ENCODE measurements at regions of chr11 and their contacts with region 1.

Region 1: GRCh38 chr11:91041626-91042025 is 818.8 kb upstream of the CHORDC1 start:
- DNase-seq: no peak

Region 2: DNA sequence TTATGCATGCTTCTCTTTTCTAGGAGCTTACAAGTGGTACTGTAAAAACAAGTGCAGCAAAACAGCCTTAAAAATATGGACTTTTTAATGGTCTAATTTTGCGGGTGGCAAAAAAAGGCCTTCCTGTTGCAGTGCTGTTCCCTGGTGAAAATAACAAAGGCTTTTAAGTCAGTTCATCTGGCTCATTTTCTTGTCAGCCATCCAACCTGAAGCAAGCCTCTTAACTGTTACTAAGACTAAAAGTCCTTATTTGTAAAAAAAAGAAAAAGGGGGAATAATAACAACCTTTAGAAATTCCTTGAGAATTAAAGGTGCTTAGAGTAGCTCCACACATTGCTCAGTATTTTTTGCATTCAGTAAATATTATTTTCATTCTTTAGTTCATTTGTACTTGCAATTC is 618.2 kb before region 1 on chr11:
- intact Hi-C with region 1: loop called in 1 of 2 experiments (anchors 5 kb)
- DNase-seq: no peak

Region 3: DNA sequence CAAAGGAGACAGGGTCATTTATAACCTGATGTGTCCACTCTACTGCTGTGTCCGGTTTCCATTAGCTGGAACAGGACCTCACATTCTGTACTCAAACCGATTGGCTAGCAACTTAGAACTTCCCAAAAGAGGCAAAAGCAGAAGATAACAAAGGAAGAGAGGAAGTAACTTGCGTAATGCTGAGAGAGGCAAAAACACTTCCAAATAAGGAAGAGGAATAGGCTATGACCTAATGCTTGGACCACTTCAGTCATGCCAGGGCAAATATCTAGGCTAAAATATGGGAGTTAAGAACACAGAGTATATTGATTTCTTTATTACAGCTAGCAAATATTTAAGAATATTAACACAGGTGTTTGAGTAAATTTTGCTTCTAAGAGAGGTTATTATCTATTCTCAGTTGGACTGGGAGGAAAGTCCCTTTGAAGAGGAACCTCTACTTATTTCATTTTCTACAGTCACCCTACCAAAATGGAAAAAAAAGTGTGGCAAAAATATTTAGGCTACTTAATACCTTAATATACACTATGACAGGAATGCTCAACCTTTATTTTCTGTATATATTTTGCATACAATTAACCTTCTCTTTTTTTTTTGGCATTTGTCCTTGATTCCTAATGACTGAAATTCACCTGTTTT is 319.0 kb before region 1 on chr11:
- intact Hi-C with region 1: no loop called
- DNase-seq: no peak

Measured in posterior vena cava (tissue), 2 donors.